ENCODE measurements at regions of chr19 and their contacts with region 1.

Region 1: GRCh38 chr19:55383789-55384577 is at the start of gene TMEM238:
- DNase-seq: peak; percentile 67
- H3K4me3 ChIP-seq: peak within 1 kb of the TSS; percentile 80 to 92
- H3K27ac ChIP-seq: peak within 1 kb of the TSS; percentile 92 to 93
- H3K4me1 ChIP-seq: peaks cover 37% of the 10 kb centered on the region
- H3K27me3 ChIP-seq: no peaks in the 10 kb centered on the region
- CTCF ChIP-seq: peak in 1 of 3 experiments; percentile 15
- POLR2A ChIP-seq: no peak
- total RNA-seq, gene TMEM238: 1.7 to 6.4 TPM

Region 2: GRCh38 chr19:55258476-55258827 is 125.5 kb before region 1 on chr19:
- intact Hi-C with region 1: no loop called
- DNase-seq: no peak
- H3K4me3 ChIP-seq: peak overlapping the region; percentile 93 to 98
- H3K27ac ChIP-seq: peak overlapping the region; percentile 88 to 97
- H3K4me1 ChIP-seq: peaks cover 31% of the 10 kb centered on the region
- H3K27me3 ChIP-seq: no peaks in the 10 kb centered on the region
- CTCF ChIP-seq: no peak
- POLR2A ChIP-seq: no peak

Region 3: GRCh38 chr19:55279770-55280643 is 104.0 kb before region 1 on chr19 and contains the start of gene HSPBP1:
- intact Hi-C with region 1: no loop called
- DNase-seq: peak; percentile 94
- H3K4me3 ChIP-seq: peak within 1 kb of the TSS; percentile 59 to 82
- H3K27ac ChIP-seq: peak within 1 kb of the TSS; percentile 68 to 75
- H3K4me1 ChIP-seq: peaks cover 8% of the 10 kb centered on the region
- H3K27me3 ChIP-seq: no peaks in the 10 kb centered on the region
- CTCF ChIP-seq: no peak
- POLR2A ChIP-seq: no peak
- total RNA-seq, gene HSPBP1: 43.5 to 48.2 TPM

Region 4: DNA sequence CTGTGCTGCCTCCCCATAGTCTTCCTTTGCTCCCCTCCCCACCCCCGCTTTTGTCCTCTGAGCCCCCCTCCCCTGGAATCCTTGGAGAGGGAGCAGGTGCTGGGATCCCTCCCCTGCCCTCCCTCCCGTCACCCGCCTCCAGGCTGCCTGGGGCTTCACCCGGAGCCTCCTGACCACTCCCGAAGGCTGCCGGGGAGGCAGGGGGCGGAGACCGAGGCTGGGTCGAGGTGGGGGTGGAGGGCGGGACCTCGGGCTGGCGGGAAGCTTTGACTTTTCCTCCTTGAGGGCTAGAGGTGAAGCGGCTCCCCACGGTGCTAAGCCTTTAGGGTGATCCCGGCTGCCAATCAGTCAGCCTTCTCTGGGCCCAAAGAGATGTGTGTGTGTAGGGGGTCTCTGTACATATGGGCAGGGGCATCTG is 42.8 kb before region 1 on chr19:
- intact Hi-C with region 1: loop called (anchors 5 kb)
- DNase-seq: peak; percentile 83
- H3K4me3 ChIP-seq: peak overlapping the region; percentile 73 to 75
- H3K27ac ChIP-seq: peak overlapping the region in 1 of 2 donors; percentile 90
- H3K4me1 ChIP-seq: peaks cover 20% of the 10 kb centered on the region
- H3K27me3 ChIP-seq: no peaks in the 10 kb centered on the region
- CTCF ChIP-seq: no peak
- POLR2A ChIP-seq: no peak